ENCODE measurements at regions of chr11 and their contacts with region 1.

Region 1: GRCh38 chr11:58513747-58514367 is 6.0 kb upstream of the OR5B21 start:
- DNase-seq: peak; percentile 64
- H3K4me3 ChIP-seq: no peak overlapping the region
- H3K27ac ChIP-seq: no peak overlapping the region
- H3K4me1 ChIP-seq: no peaks in the 10 kb centered on the region
- H3K27me3 ChIP-seq: no peaks in the 10 kb centered on the region
- CTCF ChIP-seq: peak; percentile 76

Region 2: DNA sequence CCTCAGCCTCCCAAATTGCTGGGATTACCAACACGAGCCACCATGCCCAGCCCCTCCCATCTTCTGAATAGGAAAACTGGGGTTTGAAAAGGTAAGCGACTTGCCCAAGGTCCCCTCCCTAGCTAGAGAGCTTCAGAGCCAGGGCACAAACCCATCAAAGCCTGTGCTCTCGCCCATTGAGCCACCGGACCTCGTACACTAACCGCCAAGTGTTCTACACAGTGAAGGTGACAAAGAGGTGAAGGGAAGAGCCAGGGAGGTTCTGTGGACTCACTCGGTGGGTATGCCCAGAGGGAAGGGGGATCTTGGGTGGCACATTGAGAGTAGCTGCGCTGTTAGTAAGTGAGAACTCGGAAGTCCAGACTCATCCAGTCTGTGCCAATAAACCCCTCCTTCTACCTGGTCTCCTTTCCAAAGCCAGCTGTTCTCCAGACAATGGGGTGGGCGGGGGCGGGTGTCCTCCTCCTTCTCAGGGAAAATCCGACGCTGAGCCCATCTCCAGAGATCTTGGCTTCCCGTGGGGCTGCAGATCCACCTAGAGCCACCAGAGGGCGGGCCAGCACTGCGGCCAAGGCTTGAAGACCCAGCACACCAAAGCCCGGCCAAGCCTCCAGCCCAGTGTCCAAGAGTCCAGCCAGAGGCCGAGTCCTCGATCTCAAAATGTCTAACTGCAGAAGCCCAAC is 1056.8 kb before region 1 on chr11:
- CTCF ChIA-PET with region 1: no interaction called
- dilution Hi-C with region 1: no loop called
- in situ Hi-C with region 1: no loop called
- intact Hi-C with region 1: loop called (anchors 5 kb)
- DNase-seq: peak; percentile 68
- H3K4me3 ChIP-seq: no peak overlapping the region
- H3K27ac ChIP-seq: no peak overlapping the region
- H3K4me1 ChIP-seq: peaks cover 20% of the 10 kb centered on the region
- H3K27me3 ChIP-seq: peaks cover 16% of the 10 kb centered on the region
- CTCF ChIP-seq: peak; percentile 94 to 99

Region 3: GRCh38 chr11:57644748-57645688 is 868.8 kb before region 1 on chr11:
- CTCF ChIA-PET with region 1: no interaction called
- dilution Hi-C with region 1: no loop called
- in situ Hi-C with region 1: no loop called
- intact Hi-C with region 1: loop called (anchors 10 kb)
- DNase-seq: no peak
- H3K4me3 ChIP-seq: no peak overlapping the region
- H3K27ac ChIP-seq: no peak overlapping the region
- H3K4me1 ChIP-seq: peaks cover 49% of the 10 kb centered on the region
- H3K27me3 ChIP-seq: no peaks in the 10 kb centered on the region
- CTCF ChIP-seq: peak; percentile 63 to 86

Region 4: GRCh38 chr11:57751676-57752253 is 762.1 kb before region 1 on chr11 and contains the start of gene BTBD18:
- CTCF ChIA-PET with region 1: interaction called, 6 read pairs
- dilution Hi-C with region 1: no loop called
- in situ Hi-C with region 1: no loop called
- intact Hi-C with region 1: loop called (anchors 1 kb)
- DNase-seq: peak; percentile 49
- H3K4me3 ChIP-seq: no peak within 1 kb of the TSS
- H3K27ac ChIP-seq: no peak within 1 kb of the TSS
- H3K4me1 ChIP-seq: no peaks in the 10 kb centered on the region
- H3K27me3 ChIP-seq: no peaks in the 10 kb centered on the region
- CTCF ChIP-seq: peak; percentile 55 to 63
- total RNA-seq, gene BTBD18: not detected

Region 5: DNA sequence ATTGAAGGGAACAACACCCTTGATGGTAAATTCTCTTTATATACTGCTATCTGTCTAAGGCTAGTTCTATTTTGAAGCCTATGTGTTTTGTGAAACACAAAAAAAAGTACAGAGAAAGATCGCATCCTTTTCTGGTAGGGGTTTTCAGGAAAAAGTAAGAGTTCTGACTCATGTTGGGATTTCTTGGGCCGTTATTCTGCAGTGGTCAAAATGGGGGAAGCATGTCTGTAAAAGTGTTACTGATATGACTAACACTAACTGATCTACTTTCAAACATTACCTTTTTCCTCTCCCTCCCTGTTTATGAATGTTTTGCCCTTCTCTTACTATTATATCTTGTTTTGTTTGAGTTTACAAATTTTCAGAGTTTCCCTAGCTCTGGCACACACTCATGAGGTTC is 698.4 kb before region 1 on chr11:
- CTCF ChIA-PET with region 1: no interaction called
- dilution Hi-C with region 1: loop called (anchors 25 kb)
- in situ Hi-C with region 1: loop called (anchors 10 to 25 kb)
- intact Hi-C with region 1: loop called (anchors 5 kb)
- DNase-seq: no peak
- H3K4me3 ChIP-seq: no peak overlapping the region
- H3K27ac ChIP-seq: no peak overlapping the region
- H3K4me1 ChIP-seq: no peaks in the 10 kb centered on the region
- H3K27me3 ChIP-seq: no peaks in the 10 kb centered on the region
- CTCF ChIP-seq: no peak

Region 6: DNA sequence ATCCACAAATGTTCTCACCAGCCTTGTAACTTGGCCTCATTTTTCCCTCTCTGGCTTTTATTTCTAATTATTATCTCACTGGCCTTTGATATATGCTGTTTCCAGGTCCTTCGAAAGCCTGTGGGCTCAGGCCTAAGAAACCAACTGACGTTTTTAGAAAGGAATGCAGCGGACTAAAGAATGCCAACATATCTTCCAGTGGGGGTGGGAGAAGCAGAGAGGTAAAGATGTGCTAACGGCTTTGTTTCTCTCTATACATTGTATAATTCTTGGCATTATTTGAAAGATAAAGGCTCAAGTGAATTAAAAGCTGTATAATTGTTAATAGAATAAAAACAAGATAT is 454.9 kb before region 1 on chr11:
- CTCF ChIA-PET with region 1: no interaction called
- dilution Hi-C with region 1: no loop called
- in situ Hi-C with region 1: loop called in 1 of 2 experiments (anchors 25 kb)
- intact Hi-C with region 1: loop called (anchors 5 kb)
- DNase-seq: peak; percentile 78
- H3K4me3 ChIP-seq: no peak overlapping the region
- H3K27ac ChIP-seq: peak overlapping the region; percentile 77
- H3K4me1 ChIP-seq: peaks cover 47% of the 10 kb centered on the region
- H3K27me3 ChIP-seq: no peaks in the 10 kb centered on the region
- CTCF ChIP-seq: no peak

Region 7: DNA sequence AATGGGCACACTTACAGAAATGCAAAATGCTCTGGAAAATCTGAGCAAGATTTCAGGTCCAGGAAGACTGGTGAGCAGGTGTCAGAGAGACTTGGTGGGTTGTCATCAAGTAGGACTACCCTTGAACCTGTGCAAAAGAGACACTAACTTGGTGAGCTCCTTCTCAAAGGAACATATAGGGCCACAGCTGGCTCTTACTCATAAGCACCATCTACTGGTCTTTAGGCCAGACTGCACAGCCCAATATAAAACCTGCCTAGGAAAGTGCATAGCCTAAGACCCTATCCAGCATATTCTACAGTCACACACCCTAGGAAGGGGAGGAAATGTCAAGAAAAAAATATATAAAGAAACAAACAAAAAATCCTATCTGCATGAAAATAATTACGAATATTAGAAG is 227.6 kb before region 1 on chr11:
- CTCF ChIA-PET with region 1: no interaction called
- dilution Hi-C with region 1: no loop called
- in situ Hi-C with region 1: no loop called
- intact Hi-C with region 1: loop called (anchors 2 kb)
- DNase-seq: peak; percentile 40
- H3K4me3 ChIP-seq: no peak overlapping the region
- H3K27ac ChIP-seq: no peak overlapping the region
- H3K4me1 ChIP-seq: no peaks in the 10 kb centered on the region
- H3K27me3 ChIP-seq: no peaks in the 10 kb centered on the region
- CTCF ChIP-seq: peak; percentile 75 to 92

Region 8: DNA sequence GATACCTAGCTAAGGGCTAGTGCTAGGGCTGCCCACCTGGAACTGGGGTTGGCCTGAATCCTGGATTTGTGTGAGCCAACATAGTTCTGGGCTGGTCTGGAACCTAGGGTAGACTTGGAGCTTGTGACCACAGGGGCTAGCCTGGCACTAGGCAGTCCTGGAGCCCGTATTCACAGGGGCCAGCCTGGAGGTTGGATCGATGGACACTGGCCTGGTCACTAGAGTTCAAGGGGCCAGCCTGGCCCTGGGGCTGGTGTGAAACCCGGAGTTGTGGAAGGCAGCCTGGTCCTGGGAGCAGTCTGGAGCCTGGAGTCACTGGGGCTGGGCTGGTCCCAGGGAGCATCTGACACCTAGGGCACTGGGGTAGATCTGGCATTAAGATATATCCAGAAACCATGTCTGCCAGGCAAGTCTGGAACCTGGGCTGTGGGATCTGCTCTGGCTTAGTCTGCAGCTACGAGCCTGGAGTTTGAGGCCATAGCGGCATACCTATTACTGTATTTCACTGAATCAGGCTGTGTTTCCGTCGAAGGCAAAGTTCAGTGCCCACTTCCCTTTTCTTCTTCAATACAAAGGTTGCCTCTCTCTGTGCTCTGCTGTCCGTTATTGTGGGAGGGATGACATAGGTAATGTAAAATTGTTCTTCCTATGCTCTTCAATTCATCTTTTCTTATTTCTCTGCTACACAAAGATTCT is 563.2 kb after region 1 on chr11:
- CTCF ChIA-PET with region 1: no interaction called
- dilution Hi-C with region 1: no loop called
- in situ Hi-C with region 1: no loop called
- intact Hi-C with region 1: no loop called
- DNase-seq: no peak
- H3K4me3 ChIP-seq: no peak overlapping the region
- H3K27ac ChIP-seq: no peak overlapping the region
- H3K4me1 ChIP-seq: no peaks in the 10 kb centered on the region
- H3K27me3 ChIP-seq: peaks cover 2% of the 10 kb centered on the region
- CTCF ChIP-seq: no peak